ENCODE measurements at regions of chr2 and their contacts with region 1.

Region 1: DNA sequence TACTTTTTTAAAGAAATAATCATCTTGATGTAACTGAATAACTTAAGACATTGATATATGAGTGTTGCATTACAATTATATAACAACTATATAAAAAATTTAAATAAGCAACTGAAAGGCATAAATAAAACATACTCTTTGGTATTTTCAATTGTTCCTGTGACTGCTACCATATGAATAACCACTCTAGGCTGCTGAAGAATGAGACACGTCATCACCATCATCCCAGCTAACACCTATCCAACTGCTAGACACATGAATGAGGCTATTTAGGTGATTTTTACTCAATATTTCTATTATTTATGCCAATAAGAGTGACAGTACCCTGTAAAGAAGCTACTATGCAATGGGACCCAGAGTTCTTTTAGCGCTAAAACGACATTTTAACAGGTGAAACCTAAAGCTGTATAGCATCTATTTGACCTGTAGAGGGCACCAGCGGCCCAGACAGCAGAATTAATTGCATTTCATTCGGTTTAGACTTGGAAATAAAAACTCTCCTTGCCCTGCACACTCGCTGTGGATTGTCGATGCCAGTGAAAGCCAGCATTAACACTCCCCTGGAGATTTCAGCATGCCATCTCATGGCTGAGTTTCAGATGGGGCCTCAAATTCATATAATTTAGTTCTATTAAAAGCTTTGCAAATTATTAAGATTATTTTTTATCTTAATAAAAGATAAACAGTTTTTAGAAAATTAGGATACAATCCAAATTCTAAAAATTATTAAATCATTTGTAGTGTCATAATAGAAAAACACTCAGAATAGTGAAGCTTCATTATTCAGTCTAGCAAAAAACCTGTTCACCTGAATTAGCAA is 89.4 kb upstream of the MAP2 start:
- DNase-seq: peak in 1 of 2 experiments; percentile 61
- H3K4me3 ChIP-seq: no peak overlapping the region
- H3K27ac ChIP-seq: no peak overlapping the region
- H3K4me1 ChIP-seq: no peaks in the 10 kb centered on the region
- H3K27me3 ChIP-seq: no peaks in the 10 kb centered on the region
- CTCF ChIP-seq: peak in 2 of 3 experiments; percentile 81 to 83; a peak in 3 of 4 replicates
- EP300 ChIP-seq: no peak
- POLR2A ChIP-seq: no peak
- RAD21 ChIP-seq: peak; percentile 93 to 94

Region 2: GRCh38 chr2:208407667-208408066 is 926.7 kb before region 1 on chr2:
- CTCF ChIA-PET with region 1: interaction called, 17 read pairs
- POLR2A ChIA-PET with region 1: interaction called, 3 read pairs
- DNase-seq: no peak
- H3K4me3 ChIP-seq: peak overlapping the region in 1 of 4 experiments; percentile 55; a peak in 2 of 8 replicates
- H3K27ac ChIP-seq: no peak overlapping the region
- H3K4me1 ChIP-seq: peaks cover 0 to 5% (median 4%) of the 10 kb centered on the region in 4 experiments; a peak in 3 of 7 replicates
- H3K27me3 ChIP-seq: peaks cover 5 to 26% (median 18%) of the 10 kb centered on the region in 4 experiments
- CTCF ChIP-seq: peak in 2 of 3 experiments; percentile 55 to 60; a peak in 3 of 4 replicates
- EP300 ChIP-seq: no peak
- POLR2A ChIP-seq: no peak
- RAD21 ChIP-seq: peak; percentile 88 to 89

Region 3: DNA sequence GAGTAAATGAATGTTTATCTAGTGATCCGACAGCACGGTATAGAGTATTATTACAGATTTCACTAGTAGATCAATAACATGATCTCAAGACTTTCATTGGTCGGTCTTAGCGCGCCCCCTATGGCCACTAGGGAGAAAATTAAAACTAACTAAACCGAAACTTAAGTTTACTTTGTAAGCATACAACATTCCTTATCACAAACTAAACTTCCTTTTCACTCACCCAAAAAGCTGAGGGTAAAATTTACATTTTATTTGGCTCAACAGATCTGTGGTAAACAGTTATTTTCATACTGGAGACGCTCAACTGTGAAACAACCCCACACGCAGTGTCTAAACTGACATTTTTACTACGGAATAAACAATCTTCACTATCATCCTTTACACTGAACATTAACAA is 126.2 kb before region 1 on chr2:
- CTCF ChIA-PET with region 1: interaction called, 13 read pairs
- POLR2A ChIA-PET with region 1: no interaction called
- DNase-seq: peak; percentile 21 to 62
- H3K4me3 ChIP-seq: peak overlapping the region; percentile 0 to 60 (median 32); a peak in 7 of 8 replicates
- H3K27ac ChIP-seq: no peak overlapping the region
- H3K4me1 ChIP-seq: peaks cover 0 to 2% (median 0%) of the 10 kb centered on the region in 4 experiments; a peak in 1 of 7 replicates
- H3K27me3 ChIP-seq: no peaks in the 10 kb centered on the region
- CTCF ChIP-seq: peak in 2 of 3 experiments; percentile 62 to 67; a peak in 3 of 4 replicates
- EP300 ChIP-seq: no peak
- POLR2A ChIP-seq: no peak
- RAD21 ChIP-seq: peak; percentile 90 to 91

Region 4: GRCh38 chr2:209351636-209352035 is 17.2 kb after region 1 on chr2:
- CTCF ChIA-PET with region 1: interaction called, 13 read pairs
- POLR2A ChIA-PET with region 1: no interaction called
- DNase-seq: no peak
- H3K4me3 ChIP-seq: no peak overlapping the region
- H3K27ac ChIP-seq: no peak overlapping the region
- H3K4me1 ChIP-seq: peaks cover 0 to 9% (median 1%) of the 10 kb centered on the region in 4 experiments; a peak in 2 of 7 replicates
- H3K27me3 ChIP-seq: no peaks in the 10 kb centered on the region
- CTCF ChIP-seq: no peak
- EP300 ChIP-seq: no peak
- POLR2A ChIP-seq: no peak
- RAD21 ChIP-seq: no peak

Region 5: DNA sequence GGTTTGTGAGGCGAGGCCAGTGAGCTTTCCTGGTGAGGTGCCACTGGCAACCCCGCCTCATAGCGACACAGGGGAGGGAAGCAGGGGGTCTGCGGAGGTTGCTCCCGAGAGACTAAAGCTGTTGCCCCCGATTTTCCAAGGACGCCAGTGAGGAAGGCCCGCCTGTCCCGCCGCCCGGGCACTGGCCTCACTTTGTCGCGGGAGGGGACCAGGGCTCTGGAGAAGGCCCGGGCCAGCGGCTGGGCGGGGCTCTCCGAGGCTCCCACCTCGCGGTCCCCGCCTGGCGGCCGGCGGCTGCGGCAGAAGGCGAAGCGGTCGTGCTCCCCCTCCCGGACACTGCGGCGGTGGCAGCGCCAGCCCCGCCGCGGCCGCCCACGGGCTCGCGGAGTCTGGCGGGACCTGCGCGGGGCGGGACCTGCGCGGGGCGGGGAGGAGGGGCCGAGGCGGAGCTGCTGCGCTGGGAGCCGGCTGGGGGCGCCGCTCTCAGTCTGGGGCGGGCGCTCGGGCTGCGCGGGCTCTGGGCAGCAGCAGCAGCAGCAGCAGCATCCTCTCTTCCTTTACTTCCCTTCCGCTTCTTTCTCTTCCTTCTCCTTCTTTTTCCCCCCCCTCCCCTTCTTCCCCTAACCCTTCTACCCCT is 89.3 kb after region 1 on chr2 and contains the start of gene MAP2:
- CTCF ChIA-PET with region 1: interaction called, 31 read pairs
- POLR2A ChIA-PET with region 1: no interaction called
- DNase-seq: peak; percentile 54 to 89
- H3K4me3 ChIP-seq: peak within 1 kb of the TSS; percentile 54 to 91 (median 67)
- H3K27ac ChIP-seq: no peak within 1 kb of the TSS
- H3K4me1 ChIP-seq: peaks cover 0 to 6% (median 1%) of the 10 kb centered on the region in 4 experiments; a peak in 4 of 7 replicates
- H3K27me3 ChIP-seq: no peaks in the 10 kb centered on the region; a peak in 2 of 7 replicates
- CTCF ChIP-seq: peak; percentile 85 to 100 (median 90)
- EP300 ChIP-seq: 0 out of 3 replicates have a peak, but pooled peaks of 1 of the 2 experiments have one; percentile 26
- POLR2A ChIP-seq: peak in 1 of 2 experiments; percentile 50; a peak in 1 of 3 replicates
- RAD21 ChIP-seq: peak; percentile 53 to 77
- total RNA-seq, gene MAP2: 4.6 and 5.9 TPM in 2 replicates

Region 6: DNA sequence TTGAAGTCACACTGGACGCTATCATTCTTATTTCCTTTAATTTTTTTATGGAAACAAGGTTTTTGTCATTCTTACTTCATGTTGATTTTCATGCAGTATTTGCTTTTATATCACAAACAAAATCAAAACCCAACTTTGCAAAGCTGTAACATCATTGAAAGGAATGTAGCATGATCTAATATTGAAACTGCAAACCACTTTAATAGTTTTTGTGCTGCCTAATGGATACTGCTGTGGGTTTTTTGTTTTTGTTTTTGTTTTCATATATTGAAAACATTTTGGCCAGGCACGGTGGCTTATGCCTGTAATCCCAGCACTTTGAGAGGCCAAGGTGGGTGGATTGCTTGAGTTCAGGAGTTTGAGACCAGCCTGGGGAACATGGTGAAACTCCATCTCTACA is 171.0 kb after region 1 on chr2:
- CTCF ChIA-PET with region 1: no interaction called
- POLR2A ChIA-PET with region 1: no interaction called
- DNase-seq: no peak
- H3K4me3 ChIP-seq: no peak overlapping the region
- H3K27ac ChIP-seq: no peak overlapping the region
- H3K4me1 ChIP-seq: no peaks in the 10 kb centered on the region; a peak in 1 of 7 replicates
- H3K27me3 ChIP-seq: no peaks in the 10 kb centered on the region
- CTCF ChIP-seq: no peak
- EP300 ChIP-seq: no peak
- POLR2A ChIP-seq: no peak
- RAD21 ChIP-seq: no peak

Region 7: GRCh38 chr2:209960676-209961630 is 626.5 kb after region 1 on chr2:
- CTCF ChIA-PET with region 1: interaction called, 14 read pairs
- POLR2A ChIA-PET with region 1: no interaction called
- DNase-seq: peak; percentile 39 to 53
- H3K4me3 ChIP-seq: peak overlapping the region in 1 of 4 experiments; percentile 7; a peak in 1 of 8 replicates
- H3K27ac ChIP-seq: no peak overlapping the region
- H3K4me1 ChIP-seq: peaks cover 0 to 17% (median 2%) of the 10 kb centered on the region in 4 experiments; a peak in 4 of 7 replicates
- H3K27me3 ChIP-seq: peaks cover 0 to 10% (median 3%) of the 10 kb centered on the region in 4 experiments; a peak in 4 of 7 replicates
- CTCF ChIP-seq: peak; percentile 18 to 72 (median 60)
- EP300 ChIP-seq: no peak
- POLR2A ChIP-seq: no peak
- RAD21 ChIP-seq: peak; percentile 87 to 90